ENCODE measurements at regions of chr11 and their contacts with region 1.

Region 1: GRCh38 chr11:132941024-132941646 is 591.2 kb downstream of the OPCML start:
- DNase-seq: no peak
- ATAC-seq: no peak
- H3K4me3 ChIP-seq: no peak overlapping the region
- H3K27ac ChIP-seq: no peak overlapping the region
- H3K4me1 ChIP-seq: peaks cover 2% of the 10 kb centered on the region
- H3K27me3 ChIP-seq: peaks cover 2% of the 10 kb centered on the region

Region 2: DNA sequence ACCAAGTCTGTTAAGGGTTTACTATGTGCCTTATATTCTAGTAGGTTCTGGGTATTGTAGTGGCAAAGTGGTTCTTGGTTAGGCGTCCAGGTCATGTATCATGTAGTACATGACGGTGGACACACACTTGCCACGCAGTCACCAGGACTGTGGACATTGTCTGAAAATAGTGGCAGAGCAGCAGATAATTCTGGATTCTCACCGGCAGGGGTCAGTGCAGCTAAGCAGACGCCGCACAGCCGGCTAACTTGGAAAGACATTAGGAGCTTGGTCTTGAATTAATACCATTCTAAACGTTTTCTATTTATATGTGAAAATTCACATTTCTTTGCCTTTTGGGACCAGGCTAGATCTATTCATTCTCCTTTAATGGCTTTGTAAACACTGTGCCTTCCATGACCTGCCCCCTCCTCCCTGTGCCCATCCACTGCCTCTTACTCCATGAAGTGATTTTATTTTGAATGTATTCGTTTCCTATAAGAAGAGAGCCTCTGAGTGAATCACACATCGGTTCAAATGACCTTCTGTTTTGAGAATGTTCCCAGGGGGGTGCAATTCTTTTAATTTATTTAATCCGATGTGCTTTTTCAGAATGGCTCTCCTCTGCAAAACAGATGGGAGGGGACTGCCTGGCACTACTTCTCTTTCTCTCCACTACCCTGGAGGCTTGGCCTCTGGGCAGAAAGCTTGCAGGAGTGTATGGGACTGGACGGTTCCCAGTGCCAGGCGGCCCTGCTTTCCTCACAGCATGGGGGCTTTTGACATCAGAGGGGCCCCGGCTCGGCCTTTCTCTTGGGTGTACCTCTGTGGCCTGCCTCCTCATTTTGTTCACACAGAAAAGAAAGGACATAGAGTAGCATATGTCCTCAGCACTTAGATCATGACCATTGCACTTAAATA is 1192.7 kb before region 1 on chr11:
- intact Hi-C with region 1: loop called in 1 of 4 experiments (anchors 10 kb)
- DNase-seq: peak; percentile 58 to 80 (median 72)
- ATAC-seq: peak; percentile 66 to 77
- H3K4me3 ChIP-seq: no peak overlapping the region
- H3K27ac ChIP-seq: no peak overlapping the region
- H3K4me1 ChIP-seq: no peaks in the 10 kb centered on the region
- H3K27me3 ChIP-seq: no peaks in the 10 kb centered on the region

Region 3: DNA sequence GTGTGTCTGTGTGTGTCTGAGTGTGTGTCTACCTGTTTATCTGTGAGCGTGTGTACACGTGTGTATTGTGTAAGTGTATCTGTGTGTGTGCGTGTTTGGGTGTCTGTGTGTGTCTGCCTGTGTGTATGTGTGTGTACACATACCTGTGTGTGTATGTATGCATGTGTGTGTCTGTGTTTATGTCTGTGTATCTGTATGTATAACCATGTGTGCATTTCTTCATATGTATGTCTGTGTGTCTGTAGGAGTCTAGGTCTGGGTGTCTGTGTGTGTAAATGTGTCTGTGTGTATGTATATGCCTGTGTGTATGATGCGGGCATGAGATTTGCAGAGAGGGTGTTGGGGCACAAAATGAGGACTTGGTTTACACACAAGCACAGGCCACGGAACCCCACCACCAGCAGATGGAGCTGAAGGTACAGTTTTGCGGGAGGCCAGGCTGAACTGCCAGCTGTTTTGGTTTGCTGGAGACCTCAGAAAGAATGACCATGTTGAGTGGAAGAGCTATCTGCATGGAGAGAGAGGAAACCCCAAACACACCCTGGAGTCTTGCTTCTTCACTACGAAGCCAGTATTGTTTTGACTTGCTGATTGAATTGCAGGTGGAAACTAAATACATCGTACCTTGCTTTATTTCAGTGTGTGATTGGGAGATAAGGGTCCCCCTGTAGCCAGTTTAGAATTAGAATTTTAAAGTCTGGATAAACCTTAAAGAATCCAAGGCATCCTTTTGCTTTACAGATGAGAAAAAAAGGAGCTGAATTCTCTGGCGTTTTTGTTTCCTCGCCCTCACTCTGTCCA is 1073.5 kb before region 1 on chr11:
- intact Hi-C with region 1: loop called in 1 of 4 experiments (anchors 10 kb)
- DNase-seq: peak; percentile 76 to 89 (median 86)
- ATAC-seq: peak; percentile 76 to 87
- H3K4me3 ChIP-seq: no peak overlapping the region
- H3K27ac ChIP-seq: no peak overlapping the region
- H3K4me1 ChIP-seq: no peaks in the 10 kb centered on the region
- H3K27me3 ChIP-seq: no peaks in the 10 kb centered on the region

Region 4: GRCh38 chr11:132972565-132972964 is 31.4 kb after region 1 on chr11:
- intact Hi-C with region 1: no loop called
- DNase-seq: no peak
- ATAC-seq: no peak
- H3K4me3 ChIP-seq: no peak overlapping the region
- H3K27ac ChIP-seq: no peak overlapping the region
- H3K4me1 ChIP-seq: no peaks in the 10 kb centered on the region
- H3K27me3 ChIP-seq: no peaks in the 10 kb centered on the region

Region 5: DNA sequence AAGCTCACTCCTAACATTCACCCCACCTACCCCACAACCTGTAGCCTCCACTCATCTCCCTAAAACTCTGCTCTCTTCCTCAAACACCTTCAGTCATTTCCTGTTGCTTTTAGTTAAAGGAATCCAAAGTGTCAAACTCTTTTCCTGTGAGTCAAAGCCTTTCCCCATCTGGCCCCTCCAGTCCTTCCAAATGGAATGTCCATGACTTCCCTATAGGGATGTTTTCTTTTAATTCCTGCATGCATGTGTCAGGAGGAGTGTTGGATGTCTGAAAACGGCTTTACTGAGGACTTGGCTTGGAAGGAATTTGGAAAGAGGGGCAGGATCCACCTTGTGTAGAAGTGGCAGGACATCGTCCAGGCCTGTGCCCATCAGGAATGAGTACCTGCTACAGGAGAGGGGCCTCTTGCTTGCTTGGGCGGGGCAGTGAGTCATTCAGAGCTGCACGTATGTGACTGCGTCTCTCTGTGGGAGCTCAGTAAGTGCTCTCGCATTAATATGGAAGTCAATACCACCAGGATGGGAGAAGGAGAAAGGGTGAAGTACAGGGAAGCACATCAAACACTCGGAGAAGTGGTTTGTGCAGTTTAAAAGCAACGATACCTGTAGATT is 99.3 kb after region 1 on chr11:
- intact Hi-C with region 1: no loop called
- DNase-seq: no peak
- ATAC-seq: no peak
- H3K4me3 ChIP-seq: no peak overlapping the region
- H3K27ac ChIP-seq: no peak overlapping the region
- H3K4me1 ChIP-seq: no peaks in the 10 kb centered on the region
- H3K27me3 ChIP-seq: no peaks in the 10 kb centered on the region

Region 6: GRCh38 chr11:133064152-133064877 is 123.2 kb after region 1 on chr11:
- intact Hi-C with region 1: loop called in 1 of 4 experiments (anchors 5 kb)
- DNase-seq: peak; percentile 87 to 92 (median 89)
- ATAC-seq: peak; percentile 96 to 97
- H3K4me3 ChIP-seq: peak overlapping the region; percentile 51
- H3K27ac ChIP-seq: peak overlapping the region; percentile 55
- H3K4me1 ChIP-seq: no peaks in the 10 kb centered on the region
- H3K27me3 ChIP-seq: no peaks in the 10 kb centered on the region